Right ventricle myocardium inferior (tissue), 1 donor: ENCODE measurements at regions of chr12 and their contacts with region 1.

Region 1: DNA sequence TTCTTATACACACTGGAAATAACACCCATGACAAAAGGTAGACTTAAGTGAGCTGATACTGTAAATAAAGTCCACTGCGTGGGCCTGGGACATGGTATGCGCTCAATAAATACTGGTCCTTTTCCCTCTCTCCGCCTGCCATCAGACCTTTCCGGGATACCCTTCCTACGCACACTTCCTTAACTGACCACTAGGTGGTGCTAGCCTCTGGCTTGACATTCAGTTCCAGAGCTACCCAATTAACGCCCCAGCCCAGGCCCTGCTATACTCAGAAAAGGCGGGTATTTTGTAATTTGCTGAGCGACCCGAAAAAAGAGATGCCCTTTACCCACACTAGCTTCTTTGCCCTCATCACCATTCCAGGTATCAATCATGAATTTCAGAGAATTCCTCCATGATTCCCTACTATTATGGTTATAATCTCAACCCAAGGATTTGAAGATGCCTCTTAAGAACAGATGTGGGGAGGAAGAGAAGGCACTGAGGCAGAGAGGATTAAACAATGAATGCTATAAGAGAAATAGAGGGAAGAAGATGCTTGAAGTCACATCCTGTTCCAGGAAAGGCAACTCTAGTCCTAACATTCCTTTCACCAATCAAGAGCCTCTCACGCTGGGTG is 3.9 kb upstream of the LRP1 start:
- DNase-seq: peak; percentile 64
- ATAC-seq: no peak

Region 2: GRCh38 chr12:57148469-57149244 is 24.3 kb after region 1 on chr12:
- intact Hi-C with region 1: loop called (anchors 2 kb)
- DNase-seq: peak; percentile 83
- ATAC-seq: peak; percentile 64

Region 3: DNA sequence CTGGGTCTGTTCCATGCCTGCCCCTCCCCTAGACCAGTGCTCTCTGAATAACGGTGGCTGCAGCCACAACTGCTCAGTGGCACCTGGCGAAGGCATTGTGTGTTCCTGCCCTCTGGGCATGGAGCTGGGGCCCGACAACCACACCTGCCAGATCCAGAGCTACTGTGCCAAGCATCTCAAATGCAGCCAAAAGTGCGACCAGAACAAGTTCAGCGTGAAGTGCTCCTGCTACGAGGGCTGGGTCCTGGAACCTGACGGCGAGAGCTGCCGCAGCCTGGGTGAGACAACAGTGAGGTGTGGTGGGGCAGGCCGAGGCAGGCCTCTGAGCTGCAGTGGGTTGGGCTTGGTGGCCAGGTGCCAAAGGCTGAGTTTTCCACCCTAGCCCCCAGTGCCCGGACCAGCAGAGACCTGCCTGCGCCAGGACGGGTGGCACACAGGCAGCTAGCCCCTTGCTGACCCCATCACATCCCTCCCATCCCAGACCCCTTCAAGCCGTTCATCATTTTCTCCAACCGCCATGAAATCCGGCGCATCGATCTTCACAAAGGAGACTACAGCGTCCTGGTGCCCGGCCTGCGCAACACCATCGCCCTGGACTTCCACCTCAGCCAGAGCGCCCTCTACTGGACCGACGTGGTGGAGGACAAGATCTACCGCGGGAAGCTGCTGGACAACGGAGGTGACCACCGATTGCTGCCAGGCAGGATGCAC is 51.2 kb after region 1 on chr12:
- intact Hi-C with region 1: loop called (anchors 1 kb)
- DNase-seq: peak; percentile 89
- ATAC-seq: peak; percentile 72

Region 4: GRCh38 chr12:57182921-57183790 is 58.8 kb after region 1 on chr12:
- intact Hi-C with region 1: loop called (anchors 1 kb)
- DNase-seq: peak; percentile 84
- ATAC-seq: peak; percentile 80